Common myeloid progenitor, CD34-positive (primary cell): ENCODE measurements at regions of chr6 and their contacts with region 1.

Region 1: DNA sequence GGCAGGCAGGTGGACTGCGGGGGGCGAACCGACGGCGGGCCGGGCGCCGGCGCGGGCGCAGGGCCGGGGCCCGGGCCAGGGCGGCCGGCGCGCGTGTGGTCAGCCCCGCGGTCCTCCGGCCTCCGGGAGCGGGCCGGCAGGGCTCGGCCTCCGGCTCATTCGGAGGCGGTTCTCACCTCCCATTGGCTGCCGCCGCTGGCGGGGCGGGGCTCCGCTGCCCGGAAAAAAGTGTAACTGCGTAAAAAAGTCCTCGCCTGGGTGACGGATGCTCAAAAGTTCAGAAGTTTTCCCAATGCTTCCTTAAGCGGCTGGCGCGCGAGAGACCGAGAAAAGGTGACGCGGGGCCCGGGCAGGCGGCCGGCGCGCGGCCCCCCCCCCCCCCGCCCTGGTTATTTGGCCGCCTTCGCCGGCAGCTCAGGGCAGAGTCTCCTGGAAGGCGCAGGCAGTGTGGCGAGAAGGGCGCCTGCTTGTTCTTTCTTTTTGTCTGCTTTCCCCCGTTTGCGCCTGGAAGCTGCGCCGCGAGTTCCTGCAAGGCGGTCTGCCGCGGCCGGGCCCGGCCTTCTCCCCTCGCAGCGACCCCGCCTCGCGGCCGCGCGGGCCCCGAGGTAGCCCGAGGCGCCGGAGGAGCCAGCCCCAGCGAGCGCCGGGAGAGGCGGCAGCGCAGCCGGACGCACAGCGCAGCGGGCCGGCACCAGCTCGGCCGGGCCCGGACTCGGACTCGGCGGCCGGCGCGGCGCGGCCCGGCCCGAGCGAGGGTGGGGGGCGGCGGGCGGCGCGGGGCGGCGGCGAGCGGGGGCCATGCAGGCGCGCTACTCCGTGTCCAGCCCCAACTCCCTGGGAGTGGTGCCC is at the start of gene FOXC1:
- DNase-seq: peak in 2 of 3 donors; percentile 43 to 46
- H3K4me3 ChIP-seq: peak within 1 kb of the TSS; percentile 16 to 75 (median 55)
- H3K27ac ChIP-seq: no peak within 1 kb of the TSS
- H3K4me1 ChIP-seq: peaks cover 0 to 70% (median 58%) of the 10 kb centered on the region in 4 experiments
- H3K27me3 ChIP-seq: peaks cover 12 to 95% (median 59%) of the 10 kb centered on the region in 5 experiments

Region 2: GRCh38 chr6:1286972-1287610 is 322.8 kb before region 1 on chr6:
- CTCF ChIA-PET with region 1: no interaction called
- POLR2A ChIA-PET with region 1: no interaction called
- DNase-seq: peak in 2 of 3 donors; percentile 14 to 18
- H3K4me3 ChIP-seq: no peak overlapping the region
- H3K27ac ChIP-seq: no peak overlapping the region
- H3K4me1 ChIP-seq: peaks cover 0 to 10% (median 0%) of the 10 kb centered on the region in 4 experiments
- H3K27me3 ChIP-seq: peaks cover 2 to 9% (median 2%) of the 10 kb centered on the region in 5 experiments

Region 3: GRCh38 chr6:1481326-1481725 is 128.5 kb before region 1 on chr6:
- CTCF ChIA-PET with region 1: no interaction called
- POLR2A ChIA-PET with region 1: no interaction called
- DNase-seq: no peak
- H3K4me3 ChIP-seq: no peak overlapping the region
- H3K27ac ChIP-seq: no peak overlapping the region
- H3K4me1 ChIP-seq: no peaks in the 10 kb centered on the region
- H3K27me3 ChIP-seq: peaks cover 0 to 4% (median 0%) of the 10 kb centered on the region in 5 experiments

Region 4: GRCh38 chr6:1624851-1625781 is 15.2 kb after region 1 on chr6:
- CTCF ChIA-PET with region 1: interaction called, 23 read pairs
- POLR2A ChIA-PET with region 1: interaction called, 3 read pairs
- DNase-seq: peak in 2 of 3 donors; percentile 71 to 77
- H3K4me3 ChIP-seq: peak overlapping the region; percentile 7 to 81 (median 62)
- H3K27ac ChIP-seq: no peak overlapping the region
- H3K4me1 ChIP-seq: peaks cover 0 to 22% (median 20%) of the 10 kb centered on the region in 4 experiments
- H3K27me3 ChIP-seq: peaks cover 32 to 96% (median 63%) of the 10 kb centered on the region in 5 experiments